HAP-1 (cell line): ENCODE measurements at regions of chr9 and their contacts with region 1.

Region 1: DNA sequence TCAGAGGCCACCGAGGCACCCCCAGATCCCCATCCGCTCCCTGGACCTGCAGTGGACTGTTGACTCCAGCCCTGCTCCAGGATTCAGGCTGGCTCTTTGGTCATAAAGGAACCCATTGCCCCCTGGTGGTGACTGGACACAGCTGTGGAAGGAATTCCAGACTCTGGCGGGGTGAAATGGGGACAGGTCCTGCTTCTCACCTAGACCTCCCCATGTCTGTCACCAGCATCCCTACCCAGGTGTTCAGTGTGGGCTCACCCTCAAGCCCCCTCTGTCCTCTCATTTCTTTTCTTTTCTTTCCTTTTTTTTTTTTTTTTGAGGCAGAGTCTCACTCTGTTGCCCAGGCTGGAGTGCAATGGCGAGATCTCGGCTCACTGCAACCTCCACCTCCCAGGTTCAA is 25.5 kb upstream of the STXBP1 start:
- DNase-seq: peak; percentile 50 to 85
- H3K4me3 ChIP-seq: no peak overlapping the region
- H3K4me1 ChIP-seq: no peaks in the 10 kb centered on the region
- H3K27me3 ChIP-seq: no peaks in the 10 kb centered on the region

Region 2: DNA sequence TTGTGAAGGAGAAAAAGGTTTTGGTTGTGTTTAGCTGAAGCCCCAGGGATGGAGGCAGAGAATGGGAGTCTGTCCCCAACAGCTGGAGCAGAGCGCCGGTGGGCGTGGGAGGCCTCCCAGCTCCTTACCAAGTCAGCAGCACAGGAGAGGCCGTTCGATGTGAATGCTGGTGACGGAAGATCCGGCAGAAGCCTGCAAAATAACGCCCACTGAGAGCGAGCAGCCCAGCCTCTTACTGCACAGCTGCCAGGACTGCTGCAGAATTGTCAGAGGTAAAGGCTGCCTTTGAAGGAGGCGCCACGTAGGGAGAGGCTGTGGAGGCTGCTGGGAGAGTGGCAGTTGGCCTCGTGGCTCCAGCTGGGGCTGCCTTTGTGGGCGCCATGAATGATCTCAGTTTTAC is 490.3 kb before region 1 on chr9:
- in situ Hi-C with region 1: no loop called
- DNase-seq: no peak
- H3K4me3 ChIP-seq: no peak overlapping the region
- H3K4me1 ChIP-seq: no peaks in the 10 kb centered on the region
- H3K27me3 ChIP-seq: no peaks in the 10 kb centered on the region

Region 3: DNA sequence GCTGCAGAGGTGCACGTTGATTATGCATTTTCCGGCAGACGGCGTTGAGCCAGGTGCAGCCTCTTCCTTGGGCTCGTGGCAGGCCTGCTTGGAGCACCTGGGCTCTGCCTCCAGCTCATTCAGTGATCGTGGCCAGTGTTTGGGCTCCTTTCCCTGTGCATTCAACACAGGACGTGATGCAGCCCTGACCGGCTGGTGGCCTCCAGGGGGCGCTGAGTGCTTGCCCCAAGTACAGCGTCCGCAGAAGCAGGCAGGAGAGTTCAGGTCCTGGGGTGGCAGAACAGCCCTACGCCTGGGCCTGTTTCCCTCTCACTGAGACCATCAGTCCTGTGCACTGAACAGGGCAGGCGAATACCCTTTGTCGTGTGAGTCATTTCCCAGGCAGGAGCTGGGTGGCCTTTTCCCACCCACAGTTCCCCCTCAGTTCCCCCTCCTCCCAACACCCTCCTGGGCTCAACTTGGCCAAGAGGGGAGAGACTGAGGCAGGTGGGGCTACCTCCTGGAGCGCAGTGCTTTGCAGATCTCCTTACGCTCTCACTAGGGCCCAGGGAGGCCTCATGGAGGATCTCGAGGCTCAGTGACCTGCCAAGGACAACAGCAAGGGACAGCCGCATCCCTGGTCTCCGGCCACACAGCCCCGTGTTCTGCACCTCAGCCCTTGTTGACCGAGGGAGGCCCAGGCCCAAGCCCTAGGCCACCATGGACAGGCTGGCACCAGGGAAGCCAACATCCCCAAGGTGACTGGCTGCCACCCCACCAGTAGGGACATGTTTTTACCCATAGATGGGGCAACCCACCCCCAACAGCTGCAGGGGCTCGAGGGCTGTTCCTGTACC is 82.4 kb before region 1 on chr9:
- in situ Hi-C with region 1: loop called (anchors 5 kb)
- DNase-seq: peak; percentile 49 to 87
- H3K4me3 ChIP-seq: no peak overlapping the region
- H3K4me1 ChIP-seq: no peaks in the 10 kb centered on the region
- H3K27me3 ChIP-seq: no peaks in the 10 kb centered on the region